ENCODE measurements at regions of chr5 and their contacts with region 1.

Region 1: DNA sequence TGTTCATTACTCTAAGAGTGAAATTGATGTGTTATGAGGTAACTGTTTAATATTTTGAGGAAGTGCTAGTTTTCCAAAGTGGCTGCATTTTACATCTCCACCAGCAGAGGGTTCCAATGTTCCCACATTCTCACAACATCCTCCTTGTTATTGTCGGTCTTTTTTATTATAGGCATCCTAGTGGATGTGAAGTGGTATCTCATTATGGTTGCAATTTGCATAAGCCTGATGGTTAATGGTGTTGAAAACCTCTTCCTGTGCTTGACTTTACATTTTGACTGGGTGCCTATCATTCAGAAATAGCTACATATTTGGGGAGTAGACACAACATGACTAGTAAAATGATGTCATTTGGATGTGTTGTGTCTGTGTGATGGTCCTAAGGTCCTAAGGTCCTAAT is 143.6 kb downstream of the MRPS30 start:
- DNase-seq: peak; percentile 55
- H3K4me3 Mint-ChIP-seq: no peak overlapping the region
- H3K27ac Mint-ChIP-seq: no peak overlapping the region
- H3K4me1 Mint-ChIP-seq: no peaks in the 10 kb centered on the region
- H3K27me3 Mint-ChIP-seq: no peaks in the 10 kb centered on the region
- CTCF ChIP-seq: peak; percentile 75

Region 2: DNA sequence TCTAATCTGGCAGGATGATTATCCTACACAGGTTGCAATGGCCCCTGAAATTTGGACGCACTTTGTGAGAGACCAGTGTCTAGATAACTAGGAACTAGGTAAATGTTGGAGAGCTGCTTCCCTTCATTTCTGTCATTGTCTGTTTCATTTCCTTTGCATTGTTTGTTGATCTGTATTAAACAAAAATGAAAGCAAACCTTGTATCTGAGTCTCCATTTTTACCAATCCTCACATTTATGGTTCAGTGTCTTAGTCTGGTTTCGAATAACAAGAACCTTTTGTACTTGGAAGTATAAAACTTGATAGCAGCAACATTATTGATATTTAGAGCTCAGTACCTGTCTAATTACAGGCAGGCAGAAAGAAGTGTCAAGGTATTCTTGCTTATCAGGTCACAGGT is 38.2 kb before region 1 on chr5:
- CTCF ChIA-PET with region 1: no interaction called
- POLR2A ChIA-PET with region 1: no interaction called
- intact Hi-C with region 1: no loop called
- DNase-seq: no peak
- H3K4me3 Mint-ChIP-seq: no peak overlapping the region
- H3K27ac Mint-ChIP-seq: no peak overlapping the region
- H3K4me1 Mint-ChIP-seq: no peaks in the 10 kb centered on the region
- H3K27me3 Mint-ChIP-seq: no peaks in the 10 kb centered on the region
- CTCF ChIP-seq: no peak

Region 3: GRCh38 chr5:44935262-44935661 is 17.1 kb before region 1 on chr5:
- CTCF ChIA-PET with region 1: interaction called, 12 read pairs
- POLR2A ChIA-PET with region 1: no interaction called
- intact Hi-C with region 1: no loop called
- DNase-seq: peak; percentile 42
- H3K4me3 Mint-ChIP-seq: no peak overlapping the region
- H3K27ac Mint-ChIP-seq: no peak overlapping the region
- H3K4me1 Mint-ChIP-seq: peaks cover 8% of the 10 kb centered on the region
- H3K27me3 Mint-ChIP-seq: no peaks in the 10 kb centered on the region
- CTCF ChIP-seq: peak; percentile 30

Region 4: DNA sequence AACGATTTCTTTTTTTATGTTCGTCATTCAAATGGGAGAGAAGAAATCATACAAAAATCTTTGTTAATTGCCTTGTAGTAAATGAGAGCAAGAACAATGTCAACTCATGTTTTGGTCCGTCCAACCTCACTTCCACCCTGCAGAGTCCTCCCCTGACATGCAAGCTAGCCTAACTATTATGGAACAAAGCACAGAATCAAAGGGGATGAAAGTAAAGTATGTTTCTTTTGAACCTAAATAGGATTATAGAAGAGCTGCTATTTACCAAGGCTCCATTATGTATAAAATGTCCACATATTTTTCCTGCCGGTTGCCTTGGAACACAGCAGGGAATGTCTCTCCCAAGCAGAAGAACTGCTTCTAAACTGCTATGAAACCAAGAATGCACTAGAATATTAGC is 17.4 kb after region 1 on chr5:
- CTCF ChIA-PET with region 1: interaction called, 21 read pairs
- POLR2A ChIA-PET with region 1: interaction called, 3 read pairs
- intact Hi-C with region 1: no loop called
- DNase-seq: no peak
- H3K4me3 Mint-ChIP-seq: no peak overlapping the region
- H3K27ac Mint-ChIP-seq: no peak overlapping the region
- H3K4me1 Mint-ChIP-seq: no peaks in the 10 kb centered on the region
- H3K27me3 Mint-ChIP-seq: no peaks in the 10 kb centered on the region
- CTCF ChIP-seq: no peak

Region 5: GRCh38 chr5:45038366-45038987 is 86.1 kb after region 1 on chr5:
- CTCF ChIA-PET with region 1: interaction called, 6 read pairs
- POLR2A ChIA-PET with region 1: no interaction called
- intact Hi-C with region 1: loop called (anchors 5 kb)
- DNase-seq: peak; percentile 61
- H3K4me3 Mint-ChIP-seq: no peak overlapping the region
- H3K27ac Mint-ChIP-seq: no peak overlapping the region
- H3K4me1 Mint-ChIP-seq: no peaks in the 10 kb centered on the region
- H3K27me3 Mint-ChIP-seq: no peaks in the 10 kb centered on the region
- CTCF ChIP-seq: peak; percentile 68

Region 6: GRCh38 chr5:45262046-45262590 is 309.7 kb after region 1 on chr5:
- CTCF ChIA-PET with region 1: no interaction called
- POLR2A ChIA-PET with region 1: no interaction called
- intact Hi-C with region 1: no loop called
- DNase-seq: no peak
- H3K4me3 Mint-ChIP-seq: no peak overlapping the region
- H3K27ac Mint-ChIP-seq: no peak overlapping the region
- H3K4me1 Mint-ChIP-seq: no peaks in the 10 kb centered on the region
- H3K27me3 Mint-ChIP-seq: no peaks in the 10 kb centered on the region
- CTCF ChIP-seq: no peak

Region 7: GRCh38 chr5:45521067-45521466 is 568.7 kb after region 1 on chr5:
- CTCF ChIA-PET with region 1: no interaction called
- POLR2A ChIA-PET with region 1: no interaction called
- intact Hi-C with region 1: loop called (anchors 1 kb)
- DNase-seq: peak; percentile 74
- H3K4me3 Mint-ChIP-seq: no peak overlapping the region
- H3K27ac Mint-ChIP-seq: no peak overlapping the region
- H3K4me1 Mint-ChIP-seq: no peaks in the 10 kb centered on the region
- H3K27me3 Mint-ChIP-seq: no peaks in the 10 kb centered on the region
- CTCF ChIP-seq: peak; percentile 75

Region 8: GRCh38 chr5:45639038-45639437 is 686.7 kb after region 1 on chr5:
- CTCF ChIA-PET with region 1: interaction called, 5 read pairs
- POLR2A ChIA-PET with region 1: no interaction called
- intact Hi-C with region 1: loop called (anchors 10 kb)
- DNase-seq: peak; percentile 7
- H3K4me3 Mint-ChIP-seq: no peak overlapping the region
- H3K27ac Mint-ChIP-seq: no peak overlapping the region
- H3K4me1 Mint-ChIP-seq: peaks cover 11% of the 10 kb centered on the region
- H3K27me3 Mint-ChIP-seq: no peaks in the 10 kb centered on the region
- CTCF ChIP-seq: peak; percentile 34

Region 9: GRCh38 chr5:45774528-45774927 is 822.2 kb after region 1 on chr5:
- CTCF ChIA-PET with region 1: interaction called, 29 read pairs
- POLR2A ChIA-PET with region 1: no interaction called
- intact Hi-C with region 1: loop called (anchors 1 kb)
- DNase-seq: peak; percentile 24
- H3K4me3 Mint-ChIP-seq: no peak overlapping the region
- H3K27ac Mint-ChIP-seq: no peak overlapping the region
- H3K4me1 Mint-ChIP-seq: no peaks in the 10 kb centered on the region
- H3K27me3 Mint-ChIP-seq: no peaks in the 10 kb centered on the region
- CTCF ChIP-seq: peak; percentile 50